ENCODE measurements at regions of chr21 and their contacts with region 1.

Region 1: GRCh38 chr21:34845521-34846451 is 177.0 kb downstream of the CLIC6 start:
- DNase-seq: no peak
- H3K4me3 ChIP-seq: no peak overlapping the region
- H3K27me3 ChIP-seq: no peaks in the 10 kb centered on the region
- CTCF ChIP-seq: no peak

Region 2: DNA sequence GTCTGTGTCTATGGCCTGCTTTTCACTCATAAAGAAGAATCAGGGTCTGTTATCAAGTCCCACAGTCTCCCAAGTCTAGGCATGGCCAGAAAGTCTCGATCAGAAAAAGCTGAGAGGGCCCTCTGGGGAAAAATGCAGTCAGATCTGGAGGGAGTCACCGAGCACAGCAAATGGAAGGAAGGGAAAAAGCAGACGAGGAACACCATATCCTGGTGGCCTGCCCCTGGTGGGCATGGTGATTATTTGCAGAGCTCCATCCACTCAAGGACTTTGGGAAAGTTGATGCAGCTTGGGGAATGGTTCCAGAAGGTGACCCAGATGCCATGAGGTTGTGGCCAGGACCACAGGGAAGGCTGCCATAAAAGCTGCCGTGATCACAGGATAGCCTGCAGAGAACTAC is 12.1 kb after region 1 on chr21:
- CTCF ChIA-PET with region 1: interaction called, 17 read pairs
- POLR2A ChIA-PET with region 1: no interaction called
- DNase-seq: no peak
- H3K4me3 ChIP-seq: no peak overlapping the region
- H3K27me3 ChIP-seq: no peaks in the 10 kb centered on the region
- CTCF ChIP-seq: peak; percentile 43

Region 3: GRCh38 chr21:34946916-34947534 is 101.2 kb after region 1 on chr21:
- CTCF ChIA-PET with region 1: no interaction called
- POLR2A ChIA-PET with region 1: no interaction called
- DNase-seq: no peak
- H3K4me3 ChIP-seq: no peak overlapping the region
- H3K27me3 ChIP-seq: no peaks in the 10 kb centered on the region
- CTCF ChIP-seq: no peak

Measured in BJ (cell line).